Activated CD4-positive, alpha-beta memory T cell treated with anti-CD3 and anti-CD28 coated beads for 36 hours (primary cell): ENCODE measurements at regions of chr14 and their contacts with region 1.

Region 1: GRCh38 chr14:70887207-70887681 is 20.0 kb upstream of the PCNX1 start:
- DNase-seq: peak; percentile 25
- H3K4me3 Mint-ChIP-seq: peak overlapping the region; percentile 49
- H3K27ac Mint-ChIP-seq: peak overlapping the region; percentile 85
- H3K4me1 Mint-ChIP-seq: peaks cover 82% of the 10 kb centered on the region
- H3K27me3 Mint-ChIP-seq: no peaks in the 10 kb centered on the region

Region 2: GRCh38 chr14:70809543-70810244 is 77.5 kb before region 1 on chr14:
- CTCF ChIA-PET with region 1: interaction called, 5 read pairs
- POLR2A ChIA-PET with region 1: interaction called, 4 read pairs
- intact Hi-C with region 1: loop called (anchors 1 kb)
- DNase-seq: peak; percentile 96
- H3K4me3 Mint-ChIP-seq: no peak overlapping the region
- H3K27ac Mint-ChIP-seq: no peak overlapping the region
- H3K4me1 Mint-ChIP-seq: peaks cover 6% of the 10 kb centered on the region
- H3K27me3 Mint-ChIP-seq: no peaks in the 10 kb centered on the region

Region 3: GRCh38 chr14:70856851-70857495 is 30.3 kb before region 1 on chr14:
- CTCF ChIA-PET with region 1: no interaction called
- POLR2A ChIA-PET with region 1: interaction called, 3 read pairs
- intact Hi-C with region 1: loop called (anchors 1 kb)
- DNase-seq: peak; percentile 48
- H3K4me3 Mint-ChIP-seq: no peak overlapping the region
- H3K27ac Mint-ChIP-seq: no peak overlapping the region
- H3K4me1 Mint-ChIP-seq: peaks cover 11% of the 10 kb centered on the region
- H3K27me3 Mint-ChIP-seq: no peaks in the 10 kb centered on the region

Region 4: DNA sequence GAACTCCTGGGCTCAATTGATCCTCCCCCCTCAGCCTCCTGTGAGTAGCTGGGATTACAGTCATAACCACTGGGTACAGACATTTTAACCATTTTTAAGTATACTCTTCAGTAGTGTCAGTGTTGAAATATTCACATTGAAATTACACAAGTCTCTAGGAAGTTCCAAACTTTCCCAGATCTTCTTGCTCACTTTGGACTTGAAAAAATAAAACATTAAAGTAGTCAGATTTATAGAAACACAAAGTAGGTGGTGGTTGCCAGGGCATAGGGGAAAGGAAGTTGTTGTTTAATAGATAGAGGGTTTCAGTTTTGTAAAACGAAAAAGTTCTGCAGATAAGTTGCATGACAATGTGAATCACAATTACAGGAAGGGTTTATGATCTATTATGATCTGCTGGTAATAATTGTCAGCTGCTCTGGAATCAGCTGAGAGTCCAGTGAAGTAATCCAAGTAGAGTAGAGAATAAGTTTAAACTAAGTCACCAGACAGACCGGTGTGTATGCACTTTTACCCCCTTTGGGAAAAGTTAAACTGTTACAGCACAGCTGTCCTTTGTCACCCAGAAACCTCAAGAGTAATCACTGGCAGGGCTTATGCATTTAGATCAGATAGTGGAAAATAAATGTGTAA is 47.4 kb after region 1 on chr14:
- CTCF ChIA-PET with region 1: interaction called, 6 read pairs
- POLR2A ChIA-PET with region 1: interaction called, 4 read pairs
- intact Hi-C with region 1: loop called (anchors 1 kb)
- DNase-seq: peak; percentile 44
- H3K4me3 Mint-ChIP-seq: peak overlapping the region; percentile 62
- H3K27ac Mint-ChIP-seq: peak overlapping the region; percentile 88
- H3K4me1 Mint-ChIP-seq: peaks cover 78% of the 10 kb centered on the region
- H3K27me3 Mint-ChIP-seq: no peaks in the 10 kb centered on the region

Region 5: GRCh38 chr14:70981000-70981952 is 94.0 kb after region 1 on chr14:
- CTCF ChIA-PET with region 1: no interaction called
- POLR2A ChIA-PET with region 1: interaction called, 4 read pairs
- intact Hi-C with region 1: loop called (anchors 1 kb)
- DNase-seq: no peak
- H3K4me3 Mint-ChIP-seq: peak overlapping the region; percentile 50
- H3K27ac Mint-ChIP-seq: peak overlapping the region; percentile 85
- H3K4me1 Mint-ChIP-seq: peaks cover 52% of the 10 kb centered on the region
- H3K27me3 Mint-ChIP-seq: no peaks in the 10 kb centered on the region

Region 6: GRCh38 chr14:71166180-71166790 is 279.0 kb after region 1 on chr14:
- CTCF ChIA-PET with region 1: no interaction called
- POLR2A ChIA-PET with region 1: no interaction called
- intact Hi-C with region 1: no loop called
- DNase-seq: no peak
- H3K4me3 Mint-ChIP-seq: no peak overlapping the region
- H3K27ac Mint-ChIP-seq: no peak overlapping the region
- H3K4me1 Mint-ChIP-seq: peaks cover 16% of the 10 kb centered on the region
- H3K27me3 Mint-ChIP-seq: peaks cover 9% of the 10 kb centered on the region